ENCODE measurements at regions of chr10 and their contacts with region 1.

Region 1: GRCh38 chr10:32980558-32981468 is 22.8 kb upstream of the ITGB1 start:
- DNase-seq: peak; percentile 72 to 96 (median 90)
- H3K4me3 ChIP-seq: peak overlapping the region; percentile 37 to 84 (median 68)
- H3K27ac ChIP-seq: peak overlapping the region in 58 of 59 donors; percentile 13 to 97 (median 88)
- H3K27me3 ChIP-seq: no peaks in the 10 kb centered on the region
- CTCF ChIP-seq: peak in 8 of 56 donors; percentile 3 to 28 (median 14)

Region 2: DNA sequence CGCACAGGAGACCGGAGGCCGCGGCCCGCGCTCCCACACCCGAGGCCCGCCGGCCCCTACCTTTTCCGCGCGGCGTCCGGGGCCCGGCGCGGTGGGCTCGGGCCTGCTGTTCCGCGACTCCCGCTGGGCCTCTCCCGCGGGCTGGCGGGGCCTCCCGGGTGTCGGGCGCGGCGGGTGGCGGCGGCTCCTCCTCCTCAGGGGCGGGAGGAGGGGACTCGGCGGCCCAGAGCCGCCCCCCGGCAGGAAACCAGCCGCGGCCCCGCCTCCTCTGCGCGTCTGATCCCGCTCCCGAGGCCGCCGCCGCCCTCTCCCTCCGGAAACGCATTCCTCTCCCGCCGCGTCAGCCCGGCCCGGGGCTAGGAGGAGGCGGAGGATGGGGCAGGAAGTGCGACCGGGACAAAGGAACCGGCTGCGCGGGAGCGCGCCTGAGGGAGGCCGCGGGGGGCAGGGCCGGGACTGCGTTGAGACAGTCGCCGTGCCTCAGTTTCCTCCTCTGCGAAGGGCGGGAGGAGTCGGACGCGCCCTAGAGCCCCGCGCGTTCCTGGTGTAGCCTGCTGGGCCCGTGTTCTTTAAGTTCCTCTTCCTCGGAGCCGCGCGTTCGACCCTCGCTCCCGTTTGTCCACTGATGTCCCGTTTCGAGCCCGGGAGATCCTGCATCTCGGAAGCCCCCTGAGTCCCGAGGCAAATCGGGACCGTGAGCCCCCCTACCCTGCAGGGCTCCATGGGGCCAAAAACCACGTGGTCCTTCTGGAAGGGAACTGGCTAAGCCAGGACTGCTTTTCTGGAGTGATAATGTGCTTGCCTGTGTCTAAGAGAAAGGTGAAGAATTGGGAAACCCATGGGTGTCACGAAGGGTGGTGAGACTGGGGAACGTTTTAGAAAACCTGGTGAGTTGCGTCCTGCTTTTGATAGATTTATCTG is 22.5 kb before region 1 on chr10 and contains the start of gene ITGB1:
- intact Hi-C with region 1: loop called in 1 of 2 experiments (anchors 2 kb)
- DNase-seq: peak; percentile 85 to 97 (median 92)
- H3K4me3 ChIP-seq: peak within 1 kb of the TSS; percentile 71 to 98 (median 92)
- H3K27ac ChIP-seq: peak within 1 kb of the TSS; percentile 16 to 98 (median 91)
- H3K27me3 ChIP-seq: no peaks in the 10 kb centered on the region
- CTCF ChIP-seq: peak in 17 of 56 donors; percentile 6 to 43 (median 22)
- total RNA-seq, gene ITGB1: 45.5 to 146 (median 82.5) TPM

Measured in dorsolateral prefrontal cortex (tissue), 120 donors.